ENCODE measurements at regions of chr2 and their contacts with region 1.

Region 1: GRCh38 chr2:36355151-36355889 is at the start of gene CRIM1:
- DNase-seq: peak; percentile 74
- ATAC-seq: peak; percentile 70
- H3K4me3 Mint-ChIP-seq: peak within 1 kb of the TSS; percentile 74
- H3K27ac Mint-ChIP-seq: peak within 1 kb of the TSS; percentile 32
- H3K4me1 Mint-ChIP-seq: peaks cover 24% of the 10 kb centered on the region
- H3K27me3 Mint-ChIP-seq: peaks cover 41% of the 10 kb centered on the region
- total RNA-seq, gene CRIM1: 3.9 to 5.2 TPM

Region 2: DNA sequence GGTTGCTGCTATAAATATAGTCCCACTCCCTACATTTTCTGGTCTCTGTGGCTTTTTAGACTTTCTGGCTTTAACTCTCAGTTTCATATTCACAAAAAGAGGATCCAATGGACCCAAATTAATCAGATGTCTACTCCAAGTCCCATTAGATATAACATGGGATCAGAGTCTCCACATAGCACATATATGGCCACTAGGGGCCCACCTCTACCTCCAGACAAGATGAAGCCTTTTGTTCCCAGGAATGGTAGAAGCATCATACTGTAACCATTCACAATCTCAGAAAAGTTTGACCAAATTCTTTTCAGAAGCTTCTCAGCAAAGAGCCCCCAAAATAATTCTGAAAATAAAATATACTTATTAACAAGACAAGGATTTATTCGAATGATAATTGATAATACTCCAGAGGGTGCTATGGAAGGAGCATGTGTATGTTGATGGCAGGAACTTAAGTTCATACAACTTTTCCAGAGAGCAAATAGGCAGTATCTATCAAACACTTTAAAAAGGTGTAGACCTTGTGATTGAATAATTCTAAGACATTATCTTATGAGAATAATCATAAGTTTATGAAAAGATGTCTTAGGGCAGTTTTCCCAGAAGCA is 382.1 kb before region 1 on chr2:
- CTCF ChIA-PET with region 1: interaction called, 3 read pairs
- POLR2A ChIA-PET with region 1: no interaction called
- intact Hi-C with region 1: loop called (anchors 2 to 10 kb)
- DNase-seq: peak; percentile 27
- ATAC-seq: peak; percentile 60
- H3K4me3 Mint-ChIP-seq: no peak overlapping the region
- H3K27ac Mint-ChIP-seq: no peak overlapping the region
- H3K4me1 Mint-ChIP-seq: peaks cover 2% of the 10 kb centered on the region
- H3K27me3 Mint-ChIP-seq: peaks cover 2% of the 10 kb centered on the region

Region 3: GRCh38 chr2:36333350-36333972 is 21.9 kb before region 1 on chr2:
- CTCF ChIA-PET with region 1: interaction called, 15 read pairs
- POLR2A ChIA-PET with region 1: no interaction called
- intact Hi-C with region 1: no loop called
- DNase-seq: peak; percentile 17
- ATAC-seq: peak; percentile 59
- H3K4me3 Mint-ChIP-seq: no peak overlapping the region
- H3K27ac Mint-ChIP-seq: no peak overlapping the region
- H3K4me1 Mint-ChIP-seq: peaks cover 9% of the 10 kb centered on the region
- H3K27me3 Mint-ChIP-seq: peaks cover 14% of the 10 kb centered on the region

Region 4: GRCh38 chr2:36597532-36598377 is 242.4 kb after region 1 on chr2 and contains the start of gene FEZ2:
- CTCF ChIA-PET with region 1: no interaction called
- POLR2A ChIA-PET with region 1: no interaction called
- intact Hi-C with region 1: loop called in 1 of 2 experiments (anchors 2 kb)
- DNase-seq: peak; percentile 83
- ATAC-seq: peak; percentile 94
- H3K4me3 Mint-ChIP-seq: peak within 1 kb of the TSS; percentile 87
- H3K27ac Mint-ChIP-seq: peak within 1 kb of the TSS; percentile 92
- H3K4me1 Mint-ChIP-seq: peaks cover 29% of the 10 kb centered on the region
- H3K27me3 Mint-ChIP-seq: no peaks in the 10 kb centered on the region
- total RNA-seq, gene FEZ2: 9.1 to 12.2 TPM

Region 5: DNA sequence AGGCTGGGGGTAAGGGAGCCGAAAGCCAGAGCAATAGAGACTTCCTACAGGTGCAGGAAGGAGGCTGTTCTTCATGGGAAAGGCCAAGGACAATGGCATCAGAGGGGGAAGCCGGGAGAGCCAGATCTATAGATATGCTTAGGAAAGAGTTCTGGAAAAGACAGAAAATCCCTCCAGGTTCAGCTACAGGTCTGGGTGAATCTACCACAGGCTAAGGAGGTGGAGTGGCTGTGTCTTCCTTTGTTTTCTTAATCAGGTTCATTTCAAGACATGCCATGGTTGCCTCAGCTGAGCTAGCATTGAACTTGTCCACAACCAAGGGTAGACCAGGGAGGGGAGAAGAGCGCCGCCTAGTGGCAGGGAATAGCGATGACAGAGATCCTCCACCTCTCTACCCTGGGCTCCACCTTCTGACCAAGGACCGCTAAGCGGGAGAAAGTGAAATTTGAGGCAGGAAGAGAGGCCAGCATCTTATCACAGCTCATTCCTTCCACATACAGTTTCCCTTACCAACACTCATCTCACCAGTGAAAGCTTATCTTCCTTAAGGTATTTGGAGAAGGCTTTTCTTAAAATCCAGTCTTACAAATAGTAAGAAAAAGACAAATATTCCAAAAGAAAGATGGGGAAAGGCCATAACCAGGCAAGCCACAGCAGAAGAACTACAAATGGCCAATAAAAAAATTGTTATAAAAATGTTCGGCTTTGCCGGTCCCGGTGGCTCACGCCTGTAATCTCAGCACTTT is 415.4 kb after region 1 on chr2:
- CTCF ChIA-PET with region 1: interaction called, 3 read pairs
- POLR2A ChIA-PET with region 1: no interaction called
- intact Hi-C with region 1: loop called in 1 of 2 experiments (anchors 5 kb)
- DNase-seq: peak; percentile 77
- ATAC-seq: peak; percentile 86
- H3K4me3 Mint-ChIP-seq: no peak overlapping the region
- H3K27ac Mint-ChIP-seq: no peak overlapping the region
- H3K4me1 Mint-ChIP-seq: peaks cover 2% of the 10 kb centered on the region
- H3K27me3 Mint-ChIP-seq: peaks cover 3% of the 10 kb centered on the region

Region 6: GRCh38 chr2:36966370-36967235 is 611.3 kb after region 1 on chr2 and contains the start of gene STRN:
- CTCF ChIA-PET with region 1: no interaction called
- POLR2A ChIA-PET with region 1: no interaction called
- intact Hi-C with region 1: loop called in 1 of 2 experiments (anchors 1 kb)
- DNase-seq: peak; percentile 99
- ATAC-seq: peak; percentile 95
- H3K4me3 Mint-ChIP-seq: peak within 1 kb of the TSS; percentile 100
- H3K27ac Mint-ChIP-seq: peak within 1 kb of the TSS; percentile 97
- H3K4me1 Mint-ChIP-seq: peaks cover 41% of the 10 kb centered on the region
- H3K27me3 Mint-ChIP-seq: no peaks in the 10 kb centered on the region
- total RNA-seq, gene STRN: 27.7 to 32.0 TPM